Activated CD8-positive, alpha-beta T cell treated with anti-CD3 and anti-CD28 coated beads, Interleukin-2, amount 10 ng/mL, durations not matched to agents 7 days and 5 days (primary cell): ENCODE measurements at regions of chr2 and their contacts with region 1.

Region 1: DNA sequence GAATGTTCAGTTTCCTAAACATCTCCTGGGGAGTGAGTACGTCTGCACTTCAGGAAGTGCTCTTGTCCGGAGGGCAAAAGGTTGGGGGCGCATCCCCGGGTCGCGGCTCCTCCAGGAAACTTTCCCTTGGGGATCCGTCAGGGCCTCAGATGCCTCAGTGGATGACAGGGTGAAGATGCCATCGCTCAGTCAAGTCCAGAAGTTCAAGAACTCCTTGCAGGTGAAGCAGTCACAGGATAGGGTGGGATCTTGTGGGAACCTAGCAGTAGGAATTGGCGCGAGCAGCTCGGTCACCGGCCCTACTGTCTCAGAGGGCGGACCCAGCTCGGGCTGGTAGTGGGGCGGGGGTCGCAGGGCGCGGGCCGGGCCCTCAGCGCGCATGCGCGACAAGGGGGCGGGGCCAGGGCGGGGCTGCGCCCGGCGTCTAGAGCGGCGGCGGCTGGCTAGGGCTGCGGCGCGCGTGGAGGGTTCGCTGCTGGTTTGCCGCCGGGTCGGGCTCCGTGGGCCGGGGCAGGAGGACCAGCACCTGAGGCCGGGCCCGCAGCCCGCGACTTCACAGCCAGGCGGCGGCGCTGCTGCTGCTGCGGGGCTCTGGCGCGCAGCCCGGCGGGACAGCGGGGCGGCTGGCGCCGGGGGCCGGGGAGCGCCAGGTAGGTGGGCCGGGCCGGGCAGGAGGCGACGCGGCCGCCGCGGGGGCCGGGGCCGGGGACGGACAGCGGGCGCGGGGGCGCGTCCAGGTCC is at the start of gene INPP4A:
- DNase-seq: peak; percentile 78
- ATAC-seq: peak; percentile 72
- H3K4me3 Mint-ChIP-seq: peak within 1 kb of the TSS; percentile 95
- H3K27ac Mint-ChIP-seq: peak within 1 kb of the TSS; percentile 92
- H3K4me1 Mint-ChIP-seq: peaks cover 33% of the 10 kb centered on the region
- H3K27me3 Mint-ChIP-seq: no peaks in the 10 kb centered on the region
- total RNA-seq, gene INPP4A: 152 to 157 TPM

Region 2: DNA sequence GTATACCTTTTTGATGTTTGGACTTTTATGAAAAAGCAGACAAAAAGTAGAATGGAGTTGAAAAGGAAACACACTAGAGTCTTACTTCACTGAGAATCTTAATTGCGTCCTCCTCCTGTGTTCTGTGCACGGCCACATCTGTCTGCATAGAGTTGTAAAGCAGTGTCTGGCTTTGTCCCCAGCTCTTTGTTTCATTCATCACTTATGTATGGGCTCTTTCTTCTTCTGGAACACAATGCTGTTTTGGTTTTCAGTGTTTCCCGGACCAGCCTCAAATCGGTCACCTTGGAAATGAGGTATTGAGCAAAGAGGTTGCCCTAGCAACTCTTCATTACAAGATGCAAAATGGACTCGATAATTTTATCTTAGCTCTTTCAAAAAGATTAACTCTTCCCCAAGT is 202.6 kb before region 1 on chr2:
- CTCF ChIA-PET with region 1: no interaction called
- POLR2A ChIA-PET with region 1: no interaction called
- DNase-seq: no peak
- ATAC-seq: no peak
- H3K4me3 Mint-ChIP-seq: no peak overlapping the region
- H3K27ac Mint-ChIP-seq: no peak overlapping the region
- H3K4me1 Mint-ChIP-seq: no peaks in the 10 kb centered on the region
- H3K27me3 Mint-ChIP-seq: peaks cover 32% of the 10 kb centered on the region

Region 3: GRCh38 chr2:98404556-98405220 is 39.9 kb before region 1 on chr2:
- CTCF ChIA-PET with region 1: no interaction called
- POLR2A ChIA-PET with region 1: no interaction called
- DNase-seq: peak; percentile 10
- ATAC-seq: no peak
- H3K4me3 Mint-ChIP-seq: no peak overlapping the region
- H3K27ac Mint-ChIP-seq: no peak overlapping the region
- H3K4me1 Mint-ChIP-seq: peaks cover 4% of the 10 kb centered on the region
- H3K27me3 Mint-ChIP-seq: peaks cover 32% of the 10 kb centered on the region

Region 4: DNA sequence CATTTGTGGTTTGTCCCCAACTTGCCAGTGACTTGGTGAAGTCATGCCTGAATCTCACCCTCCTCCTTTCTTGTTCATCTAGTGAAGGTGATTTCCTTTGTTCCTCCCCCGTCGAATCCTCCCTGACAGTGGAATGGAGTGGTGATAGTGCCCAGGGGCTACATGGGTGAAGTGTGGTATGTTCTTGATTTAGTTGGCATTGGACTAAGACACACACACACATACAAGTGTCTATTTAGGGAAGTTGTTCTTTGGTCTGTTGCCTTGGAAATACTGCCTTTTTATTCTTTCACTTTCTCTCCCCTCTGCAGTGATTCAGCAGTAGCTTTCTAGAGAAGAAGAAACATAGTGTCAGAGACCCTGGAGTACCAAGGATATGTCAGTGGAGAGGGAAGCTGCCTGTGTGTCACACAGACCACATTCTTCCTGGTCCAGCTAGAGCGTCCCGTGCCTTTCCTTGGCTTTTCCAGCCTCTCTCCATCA is 10.9 kb after region 1 on chr2:
- CTCF ChIA-PET with region 1: interaction called, 26 read pairs
- POLR2A ChIA-PET with region 1: interaction called, 7 read pairs
- DNase-seq: no peak
- ATAC-seq: peak; percentile 54
- H3K4me3 Mint-ChIP-seq: peak overlapping the region; percentile 71
- H3K27ac Mint-ChIP-seq: peak overlapping the region; percentile 93
- H3K4me1 Mint-ChIP-seq: peaks cover 95% of the 10 kb centered on the region
- H3K27me3 Mint-ChIP-seq: no peaks in the 10 kb centered on the region

Region 5: GRCh38 chr2:98465456-98466226 is 21.0 kb after region 1 on chr2:
- CTCF ChIA-PET with region 1: interaction called, 36 read pairs
- POLR2A ChIA-PET with region 1: interaction called, 45 read pairs
- DNase-seq: peak; percentile 86
- ATAC-seq: peak; percentile 57
- H3K4me3 Mint-ChIP-seq: peak overlapping the region; percentile 73
- H3K27ac Mint-ChIP-seq: peak overlapping the region; percentile 94
- H3K4me1 Mint-ChIP-seq: peaks cover 89% of the 10 kb centered on the region
- H3K27me3 Mint-ChIP-seq: no peaks in the 10 kb centered on the region

Region 6: GRCh38 chr2:98473995-98474780 is 29.6 kb after region 1 on chr2:
- CTCF ChIA-PET with region 1: interaction called, 17 read pairs
- POLR2A ChIA-PET with region 1: interaction called, 16 read pairs
- DNase-seq: peak; percentile 19
- ATAC-seq: peak; percentile 58
- H3K4me3 Mint-ChIP-seq: peak overlapping the region; percentile 56
- H3K27ac Mint-ChIP-seq: peak overlapping the region; percentile 85
- H3K4me1 Mint-ChIP-seq: peaks cover 96% of the 10 kb centered on the region
- H3K27me3 Mint-ChIP-seq: no peaks in the 10 kb centered on the region

Region 7: GRCh38 chr2:98479959-98480524 is 35.4 kb after region 1 on chr2:
- CTCF ChIA-PET with region 1: interaction called, 15 read pairs
- POLR2A ChIA-PET with region 1: interaction called, 7 read pairs
- DNase-seq: peak; percentile 62
- ATAC-seq: peak; percentile 61
- H3K4me3 Mint-ChIP-seq: peak overlapping the region; percentile 64
- H3K27ac Mint-ChIP-seq: peak overlapping the region; percentile 93
- H3K4me1 Mint-ChIP-seq: peaks cover 100% of the 10 kb centered on the region
- H3K27me3 Mint-ChIP-seq: no peaks in the 10 kb centered on the region